ENCODE measurements at regions of chr7 and their contacts with region 1.

Region 1: GRCh38 chr7:101815835-101816493 is 1.5 kb upstream of the CUX1 start:
- DNase-seq: peak in 1 of 2 donors; percentile 82
- H3K4me3 ChIP-seq: peak overlapping the region; percentile 65 to 90
- H3K27ac ChIP-seq: peak overlapping the region; percentile 65 to 88
- H3K4me1 ChIP-seq: peaks cover 0 to 17% of the 10 kb centered on the region in 2 donors
- H3K27me3 ChIP-seq: no peaks in the 10 kb centered on the region
- CTCF ChIP-seq: no peak

Region 2: GRCh38 chr7:101362334-101363195 is 453.4 kb before region 1 on chr7 and contains the start of gene COL26A1:
- intact Hi-C with region 1: no loop called
- DNase-seq: no peak
- H3K4me3 ChIP-seq: peak within 1 kb of the TSS; percentile 61 to 62
- H3K27ac ChIP-seq: no peak within 1 kb of the TSS
- H3K4me1 ChIP-seq: peaks cover 3 to 17% of the 10 kb centered on the region in 2 donors
- H3K27me3 ChIP-seq: no peaks in the 10 kb centered on the region
- CTCF ChIP-seq: no peak
- total RNA-seq, gene COL26A1: not detected

Region 3: GRCh38 chr7:101602484-101603241 is 213.3 kb before region 1 on chr7:
- intact Hi-C with region 1: loop called (anchors 1 kb)
- DNase-seq: peak in 1 of 2 donors; percentile 82
- H3K4me3 ChIP-seq: peak overlapping the region in 1 of 2 donors; percentile 10
- H3K27ac ChIP-seq: no peak overlapping the region
- H3K4me1 ChIP-seq: peaks cover 0 to 6% of the 10 kb centered on the region in 2 donors
- H3K27me3 ChIP-seq: no peaks in the 10 kb centered on the region
- CTCF ChIP-seq: peak; percentile 86 to 89 (median 88)

Region 4: DNA sequence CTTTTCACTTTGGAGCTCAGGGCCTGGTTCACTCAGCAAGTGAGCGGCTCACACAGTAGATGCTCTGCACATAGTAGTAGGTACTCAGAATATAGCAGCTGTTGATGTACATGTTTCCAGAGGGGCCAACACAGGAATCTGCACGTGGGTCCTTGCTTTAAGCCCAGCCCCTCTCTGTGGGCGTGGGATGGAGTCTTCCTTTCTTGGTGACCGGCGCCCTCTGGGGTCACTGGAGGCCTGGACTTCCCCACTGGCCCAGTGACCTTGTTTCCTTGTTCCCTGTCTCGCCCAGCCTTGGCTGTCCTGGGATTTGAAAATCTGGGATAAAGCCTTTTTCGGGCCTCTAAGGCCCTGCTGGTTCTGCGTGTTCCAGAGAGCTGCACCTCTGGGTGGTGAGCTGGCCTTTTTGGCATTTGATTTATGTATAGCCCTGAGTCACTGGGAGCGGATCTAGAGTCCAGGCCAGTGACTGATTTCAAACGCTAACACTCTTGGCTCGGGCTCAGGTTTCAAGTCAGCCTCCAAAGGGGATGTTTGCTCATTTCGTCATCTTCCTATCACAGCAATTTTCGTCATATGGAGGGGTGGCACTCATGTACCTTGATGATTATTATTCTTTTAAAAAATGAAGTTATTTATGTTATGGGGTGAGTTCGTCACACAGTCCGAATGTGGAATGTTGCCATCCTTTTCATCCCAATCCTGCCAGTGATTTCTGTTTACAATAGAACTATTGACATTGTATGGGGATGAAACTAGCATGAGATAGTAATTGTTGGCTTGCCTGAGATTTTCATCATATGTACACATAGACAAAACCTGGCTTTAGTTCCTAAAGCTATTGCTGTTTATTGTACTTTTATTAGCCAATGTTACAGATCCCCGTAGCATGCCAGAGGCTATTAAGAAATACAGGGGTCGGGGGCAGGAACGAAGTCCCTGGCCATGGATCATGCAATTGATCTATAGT is 66.9 kb after region 1 on chr7:
- intact Hi-C with region 1: loop called (anchors 2 kb)
- DNase-seq: peak; percentile 87 to 98
- H3K4me3 ChIP-seq: peak overlapping the region in 1 of 2 donors; percentile 17
- H3K27ac ChIP-seq: peak overlapping the region; percentile 86 to 89
- H3K4me1 ChIP-seq: peaks cover 17 to 50% of the 10 kb centered on the region in 2 donors
- H3K27me3 ChIP-seq: no peaks in the 10 kb centered on the region
- CTCF ChIP-seq: no peak

Region 5: DNA sequence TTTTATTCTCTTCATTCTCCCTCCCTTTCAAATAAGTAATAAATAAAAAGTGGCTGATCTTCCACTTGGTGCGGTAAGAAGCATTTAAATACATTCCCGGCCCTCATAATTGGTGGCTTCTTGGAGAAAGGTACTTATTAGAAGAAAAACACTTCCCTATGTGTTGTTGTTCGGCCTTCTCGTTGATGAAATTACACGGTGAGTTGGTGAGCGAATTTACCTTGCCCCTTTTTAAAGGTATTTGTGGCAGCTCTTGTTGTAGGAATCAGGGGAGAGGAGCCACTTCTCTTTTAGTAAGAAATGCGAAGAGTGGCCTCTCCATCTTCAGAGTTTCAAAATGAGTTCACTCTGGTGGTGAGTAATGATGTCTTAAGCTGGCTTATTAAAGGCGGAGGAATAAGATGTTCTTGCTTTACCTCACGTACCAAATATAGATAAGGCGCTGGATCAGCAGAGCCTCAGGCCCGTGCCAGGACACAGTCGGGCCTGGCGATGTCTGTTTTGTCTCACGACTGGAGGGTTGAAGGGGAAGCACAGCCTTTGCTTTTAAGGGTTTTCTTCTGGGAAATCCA is 137.4 kb after region 1 on chr7:
- intact Hi-C with region 1: loop called (anchors 5 kb)
- DNase-seq: peak in 1 of 2 donors; percentile 83
- H3K4me3 ChIP-seq: no peak overlapping the region
- H3K27ac ChIP-seq: peak overlapping the region; percentile 58 to 82
- H3K4me1 ChIP-seq: peaks cover 4 to 31% of the 10 kb centered on the region in 2 donors
- H3K27me3 ChIP-seq: no peaks in the 10 kb centered on the region
- CTCF ChIP-seq: no peak

Region 6: DNA sequence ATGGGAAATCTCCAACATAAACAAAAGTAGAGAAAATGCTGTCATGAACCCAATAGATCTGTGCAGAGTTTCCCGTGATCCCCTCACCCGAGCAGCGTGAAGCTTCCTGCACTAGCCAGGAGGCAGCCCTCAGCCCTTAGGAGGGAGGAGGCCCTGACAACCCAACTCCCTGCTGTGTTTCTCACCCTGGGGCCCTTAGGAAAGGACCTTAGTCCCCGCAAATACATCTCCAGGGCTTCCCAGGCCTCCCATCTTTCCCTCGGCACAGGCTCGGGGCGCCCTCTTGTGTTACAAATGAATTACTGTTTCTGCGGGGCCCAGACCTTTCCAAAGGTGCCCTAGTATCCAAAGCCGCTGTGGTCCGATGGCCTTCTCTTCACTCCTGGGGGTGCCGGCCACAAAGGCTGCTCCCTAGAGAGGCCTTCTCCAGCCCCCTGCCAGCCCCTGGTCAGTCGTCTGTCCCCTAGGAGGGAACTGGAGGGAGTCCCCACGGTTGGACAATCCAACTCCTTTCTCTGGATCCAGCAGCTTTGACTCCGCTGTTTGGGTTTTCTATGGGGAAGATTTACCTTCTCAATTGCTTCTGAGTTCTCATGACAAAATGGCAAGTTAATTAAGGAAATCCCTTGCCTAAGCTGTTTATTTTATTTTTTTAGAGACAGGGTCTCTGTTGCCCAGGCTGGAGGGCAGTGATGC is 420.8 kb after region 1 on chr7:
- intact Hi-C with region 1: loop called (anchors 2 kb)
- DNase-seq: peak in 1 of 2 donors; percentile 77
- H3K4me3 ChIP-seq: no peak overlapping the region
- H3K27ac ChIP-seq: no peak overlapping the region
- H3K4me1 ChIP-seq: no peaks in the 10 kb centered on the region
- H3K27me3 ChIP-seq: no peaks in the 10 kb centered on the region
- CTCF ChIP-seq: peak; percentile 65 to 83 (median 68)

Measured in ascending aorta (tissue), 2 donors.